Heart left ventricle (tissue), 16 donors: ENCODE measurements at regions of chr3 and their contacts with region 1.

Region 1: GRCh38 chr3:196677353-196677752 is 34.7 kb downstream of the CEP19 start:
- DNase-seq: no peak
- ATAC-seq: no peak
- H3K4me3 ChIP-seq: no peak overlapping the region
- H3K27ac ChIP-seq: no peak overlapping the region
- H3K4me1 ChIP-seq: peaks cover 0 to 16% (median 0%) of the 10 kb centered on the region in 12 donors
- H3K27me3 ChIP-seq: no peaks in the 10 kb centered on the region
- CTCF ChIP-seq: no peak
- POLR2A ChIP-seq: no peak

Region 2: GRCh38 chr3:196639483-196640296 is 37.7 kb before region 1 on chr3 and contains the start of gene NRROS:
- intact Hi-C with region 1: loop called in 4 of 10 experiments (anchors 5 to 10 kb)
- DNase-seq: peak; percentile 72 to 85 (median 77)
- ATAC-seq: peak in 3 of 4 donors; percentile 85 to 89 (median 87)
- H3K4me3 ChIP-seq: peak within 1 kb of the TSS; percentile 30 to 89 (median 62)
- H3K27ac ChIP-seq: peak within 1 kb of the TSS; percentile 21 to 96 (median 75)
- H3K4me1 ChIP-seq: peaks cover 0 to 73% (median 8%) of the 10 kb centered on the region in 12 donors
- H3K27me3 ChIP-seq: peaks cover 0 to 29% (median 0%) of the 10 kb centered on the region in 9 donors
- CTCF ChIP-seq: peak in 1 of 12 donors; percentile 7
- POLR2A ChIP-seq: peak in 1 of 2 donors; percentile 41
- total RNA-seq, gene NRROS: 2.1 to 23.8 (median 3.4) TPM